Activated naive CD4-positive, alpha-beta T cell treated with anti-CD3 and anti-CD28 coated beads for 36 hours (primary cell): ENCODE measurements at regions of chr15 and their contacts with region 1.

Region 1: GRCh38 chr15:80455668-80456442 is 51.7 kb downstream of the ARNT2 start:
- DNase-seq: peak; percentile 63
- H3K4me3 Mint-ChIP-seq: no peak overlapping the region
- H3K27ac Mint-ChIP-seq: no peak overlapping the region
- H3K4me1 Mint-ChIP-seq: peaks cover 3% of the 10 kb centered on the region
- H3K27me3 Mint-ChIP-seq: peaks cover 10% of the 10 kb centered on the region

Region 2: GRCh38 chr15:80275934-80276333 is 179.9 kb before region 1 on chr15:
- CTCF ChIA-PET with region 1: no interaction called
- intact Hi-C with region 1: no loop called
- DNase-seq: no peak
- H3K4me3 Mint-ChIP-seq: no peak overlapping the region
- H3K27ac Mint-ChIP-seq: no peak overlapping the region
- H3K4me1 Mint-ChIP-seq: no peaks in the 10 kb centered on the region
- H3K27me3 Mint-ChIP-seq: peaks cover 9% of the 10 kb centered on the region

Region 3: GRCh38 chr15:80379693-80380092 is 76.2 kb before region 1 on chr15:
- CTCF ChIA-PET with region 1: no interaction called
- intact Hi-C with region 1: no loop called
- DNase-seq: no peak
- H3K4me3 Mint-ChIP-seq: no peak overlapping the region
- H3K27ac Mint-ChIP-seq: no peak overlapping the region
- H3K4me1 Mint-ChIP-seq: no peaks in the 10 kb centered on the region
- H3K27me3 Mint-ChIP-seq: peaks cover 13% of the 10 kb centered on the region

Region 4: GRCh38 chr15:80512726-80513660 is 57.1 kb after region 1 on chr15:
- CTCF ChIA-PET with region 1: interaction called, 3 read pairs
- intact Hi-C with region 1: loop called (anchors 5 kb)
- DNase-seq: no peak
- H3K4me3 Mint-ChIP-seq: no peak overlapping the region
- H3K27ac Mint-ChIP-seq: no peak overlapping the region
- H3K4me1 Mint-ChIP-seq: peaks cover 7% of the 10 kb centered on the region
- H3K27me3 Mint-ChIP-seq: no peaks in the 10 kb centered on the region

Region 5: DNA sequence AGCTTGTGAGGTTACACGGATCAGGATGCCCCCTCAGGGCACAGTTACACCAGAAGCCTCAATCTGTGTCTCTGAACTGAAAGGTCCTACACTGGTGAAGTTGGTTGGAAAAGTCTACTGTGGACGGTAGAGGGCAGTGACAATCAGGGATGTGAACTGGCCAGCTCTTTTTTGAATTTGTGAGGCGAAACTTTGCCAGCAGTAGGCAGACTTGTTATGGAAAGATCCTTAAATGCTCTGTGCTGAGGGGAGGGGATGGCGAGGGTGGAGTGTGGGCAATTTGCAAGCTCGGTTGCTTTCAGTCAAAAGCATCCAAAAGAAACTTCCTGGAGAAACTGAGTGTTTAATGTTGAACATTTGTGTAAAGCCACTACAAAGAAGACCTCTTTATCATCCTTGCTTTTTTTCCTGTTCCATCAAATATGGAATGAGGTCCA is 111.9 kb after region 1 on chr15:
- CTCF ChIA-PET with region 1: no interaction called
- intact Hi-C with region 1: loop called (anchors 5 kb)
- DNase-seq: peak; percentile 46
- H3K4me3 Mint-ChIP-seq: no peak overlapping the region
- H3K27ac Mint-ChIP-seq: no peak overlapping the region
- H3K4me1 Mint-ChIP-seq: no peaks in the 10 kb centered on the region
- H3K27me3 Mint-ChIP-seq: peaks cover 12% of the 10 kb centered on the region

Region 6: GRCh38 chr15:80695104-80695910 is 239.5 kb after region 1 on chr15 and contains the start of gene ABHD17C:
- CTCF ChIA-PET with region 1: no interaction called
- intact Hi-C with region 1: loop called (anchors 5 kb)
- DNase-seq: peak; percentile 45
- H3K4me3 Mint-ChIP-seq: peak within 1 kb of the TSS; percentile 93
- H3K27ac Mint-ChIP-seq: peak within 1 kb of the TSS; percentile 12
- H3K4me1 Mint-ChIP-seq: peaks cover 15% of the 10 kb centered on the region
- H3K27me3 Mint-ChIP-seq: peaks cover 3% of the 10 kb centered on the region
- total RNA-seq, gene ABHD17C: 6.5 to 7.3 TPM

Region 7: GRCh38 chr15:80736560-80736959 is 280.7 kb after region 1 on chr15:
- CTCF ChIA-PET with region 1: no interaction called
- intact Hi-C with region 1: no loop called
- DNase-seq: no peak
- H3K4me3 Mint-ChIP-seq: no peak overlapping the region
- H3K27ac Mint-ChIP-seq: no peak overlapping the region
- H3K4me1 Mint-ChIP-seq: no peaks in the 10 kb centered on the region
- H3K27me3 Mint-ChIP-seq: no peaks in the 10 kb centered on the region

Region 8: DNA sequence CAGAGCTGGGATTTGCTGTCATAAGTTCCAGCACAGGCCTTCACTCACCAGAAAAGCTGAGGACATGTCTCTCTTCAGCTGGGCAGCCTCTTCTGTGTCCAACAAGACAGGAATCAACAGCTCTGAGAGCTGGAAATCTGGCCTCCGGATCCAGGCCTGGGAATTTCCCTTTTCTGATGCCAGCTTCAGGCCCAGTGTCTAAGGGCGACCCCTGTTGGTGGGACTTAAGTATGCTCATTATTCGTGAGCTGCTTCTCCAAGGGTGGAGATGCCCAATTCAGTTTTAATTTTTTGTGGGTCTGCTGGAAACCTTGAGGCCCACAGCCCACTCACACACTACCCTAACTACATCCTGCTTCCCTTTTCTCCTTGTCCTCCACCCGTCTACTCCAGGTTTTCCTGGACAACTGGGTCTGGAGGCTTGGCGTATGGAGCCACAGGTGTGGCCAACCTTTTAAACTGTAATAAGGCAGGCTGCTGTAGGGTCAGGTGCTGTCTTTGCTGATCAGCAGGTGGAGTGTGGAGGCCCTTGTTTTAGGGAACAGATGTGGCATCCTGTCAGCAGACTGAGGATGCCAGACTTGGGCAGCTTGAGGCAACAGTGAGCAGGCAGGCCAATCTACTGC is 320.7 kb after region 1 on chr15:
- CTCF ChIA-PET with region 1: interaction called, 59 read pairs
- intact Hi-C with region 1: loop called (anchors 1 kb)
- DNase-seq: peak; percentile 85
- H3K4me3 Mint-ChIP-seq: no peak overlapping the region
- H3K27ac Mint-ChIP-seq: no peak overlapping the region
- H3K4me1 Mint-ChIP-seq: peaks cover 12% of the 10 kb centered on the region
- H3K27me3 Mint-ChIP-seq: peaks cover 22% of the 10 kb centered on the region

Region 9: GRCh38 chr15:80856809-80857377 is 401.0 kb after region 1 on chr15:
- CTCF ChIA-PET with region 1: no interaction called
- intact Hi-C with region 1: loop called (anchors 1 kb)
- DNase-seq: no peak
- H3K4me3 Mint-ChIP-seq: no peak overlapping the region
- H3K27ac Mint-ChIP-seq: no peak overlapping the region
- H3K4me1 Mint-ChIP-seq: peaks cover 22% of the 10 kb centered on the region
- H3K27me3 Mint-ChIP-seq: no peaks in the 10 kb centered on the region

Region 10: GRCh38 chr15:80970018-80970658 is 514.3 kb after region 1 on chr15:
- CTCF ChIA-PET with region 1: interaction called, 24 read pairs
- intact Hi-C with region 1: loop called (anchors 1 kb)
- DNase-seq: peak; percentile 76
- H3K4me3 Mint-ChIP-seq: no peak overlapping the region
- H3K27ac Mint-ChIP-seq: no peak overlapping the region
- H3K4me1 Mint-ChIP-seq: peaks cover 8% of the 10 kb centered on the region
- H3K27me3 Mint-ChIP-seq: no peaks in the 10 kb centered on the region